ENCODE measurements at regions of chr1 and their contacts with region 1.

Region 1: GRCh38 chr1:228131766-228132165 is 8.3 kb upstream of the GUK1 start:
- DNase-seq: no peak
- H3K4me3 ChIP-seq: no peak overlapping the region
- H3K27me3 ChIP-seq: peaks cover 12% of the 10 kb centered on the region
- CTCF ChIP-seq: no peak

Region 2: DNA sequence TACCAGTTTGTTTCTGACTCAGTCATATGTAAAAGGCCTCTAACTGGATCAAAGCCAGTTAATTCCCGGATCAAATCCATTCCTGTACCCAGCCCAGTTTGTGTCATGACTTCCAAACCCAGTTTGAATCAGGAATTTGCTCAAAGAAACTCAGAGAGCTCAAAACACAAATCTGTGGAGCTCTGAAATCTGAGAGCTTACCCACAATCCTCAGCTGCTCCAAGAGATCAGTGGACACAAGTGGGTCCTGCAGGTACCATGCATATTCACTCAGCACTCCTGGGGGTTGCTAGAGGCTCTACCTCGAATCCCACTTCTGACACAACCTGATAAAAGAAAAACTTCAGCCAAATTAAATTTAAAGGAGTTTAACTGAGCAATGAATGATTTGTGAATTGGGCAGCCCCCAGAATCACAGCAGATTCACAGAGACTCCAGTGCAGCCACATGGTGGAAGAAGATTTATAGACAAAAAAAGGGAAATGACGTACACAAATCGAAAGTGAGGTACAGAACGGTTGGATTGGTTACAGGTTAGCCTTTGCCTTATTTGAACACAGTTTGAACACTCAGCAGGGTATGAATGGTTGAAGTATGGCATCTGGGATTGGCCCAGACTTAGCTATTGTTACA is 10.8 kb before region 1 on chr1:
- CTCF ChIA-PET with region 1: interaction called, 42 read pairs
- POLR2A ChIA-PET with region 1: no interaction called
- DNase-seq: no peak
- H3K4me3 ChIP-seq: no peak overlapping the region
- H3K27me3 ChIP-seq: peaks cover 3% of the 10 kb centered on the region; the same call in 1 of the 2 replicates
- CTCF ChIP-seq: no peak

Region 3: DNA sequence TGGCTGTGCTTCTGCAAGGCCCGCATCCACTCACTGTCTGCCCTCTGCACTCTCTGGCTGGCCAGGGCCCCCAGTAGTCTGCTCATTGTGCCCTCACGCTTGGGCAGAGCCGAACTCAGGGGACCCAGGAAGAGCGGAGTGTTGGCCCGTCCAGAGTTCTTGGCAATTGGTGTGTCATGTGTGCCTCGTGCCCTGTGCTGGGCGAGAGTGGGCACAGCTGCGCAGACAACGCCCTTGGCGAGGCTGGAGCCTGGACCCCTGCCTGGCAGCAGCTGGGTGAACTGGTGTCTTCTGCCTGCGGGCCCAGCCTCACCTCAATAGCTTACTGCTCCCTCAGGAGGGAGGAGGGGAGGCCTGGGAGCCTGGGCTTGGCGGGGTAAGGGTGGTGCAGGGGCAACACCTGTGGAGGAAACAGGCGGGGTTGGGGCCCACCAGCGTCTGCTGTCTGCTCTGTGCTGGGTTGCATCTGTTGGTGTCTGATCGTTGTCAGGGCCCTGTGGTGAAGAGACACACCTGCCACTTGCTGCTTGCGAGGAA is 10.5 kb after region 1 on chr1:
- CTCF ChIA-PET with region 1: interaction called, 10 read pairs
- POLR2A ChIA-PET with region 1: no interaction called
- DNase-seq: no peak
- H3K4me3 ChIP-seq: peak overlapping the region; percentile 9
- H3K27me3 ChIP-seq: no peaks in the 10 kb centered on the region
- CTCF ChIP-seq: no peak

Measured in BJ (cell line).